Psoas muscle (tissue), 8 donors: ENCODE measurements at regions of chr11 and their contacts with region 1.

Region 1: DNA sequence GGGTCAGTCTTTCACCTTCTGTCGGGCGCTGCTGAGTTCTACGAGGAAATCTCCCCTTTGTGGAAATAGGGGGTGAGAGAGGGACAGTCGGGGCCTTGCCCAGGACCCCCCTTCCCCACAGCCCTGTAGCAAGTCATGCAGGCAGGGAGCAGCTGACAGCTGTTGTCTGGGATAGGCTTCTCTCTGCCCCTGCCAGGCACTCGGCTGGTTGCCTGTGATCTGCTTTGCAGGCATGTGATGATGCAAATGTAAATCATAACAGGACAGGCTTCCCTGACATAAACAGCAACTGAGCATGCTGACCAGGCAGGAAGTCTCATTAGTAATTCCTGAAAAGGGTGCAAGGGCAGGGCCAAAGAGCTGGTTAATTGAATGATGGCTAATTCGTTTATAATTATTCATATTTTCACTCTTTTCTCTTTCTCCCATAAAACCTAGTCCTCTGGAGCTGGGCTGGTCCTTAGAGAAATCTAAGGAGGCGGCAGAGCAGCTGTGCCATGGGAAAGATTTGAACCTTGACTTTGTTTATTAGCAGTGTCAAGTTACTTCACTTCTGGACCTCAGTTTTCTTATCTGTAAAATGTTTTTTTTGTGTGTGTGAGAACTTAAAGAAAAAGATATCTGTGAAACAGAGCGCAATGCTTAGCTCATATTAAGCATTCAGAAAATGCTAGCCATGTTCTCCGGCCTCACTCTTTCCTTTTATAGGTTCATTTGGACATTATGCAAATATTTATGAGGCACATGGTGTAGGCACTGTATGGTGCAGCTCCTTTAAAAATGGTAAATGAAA is 129.7 kb downstream of the LDLRAD3 start:
- DNase-seq: peak; percentile 74 to 90
- ATAC-seq: peak; percentile 94 to 98 (median 96)
- H3K4me3 ChIP-seq: peak overlapping the region; percentile 31
- H3K27ac ChIP-seq: peak overlapping the region; percentile 82
- H3K4me1 ChIP-seq: peaks cover 34% of the 10 kb centered on the region
- H3K27me3 ChIP-seq: no peaks in the 10 kb centered on the region
- CTCF ChIP-seq: no peak

Region 2: DNA sequence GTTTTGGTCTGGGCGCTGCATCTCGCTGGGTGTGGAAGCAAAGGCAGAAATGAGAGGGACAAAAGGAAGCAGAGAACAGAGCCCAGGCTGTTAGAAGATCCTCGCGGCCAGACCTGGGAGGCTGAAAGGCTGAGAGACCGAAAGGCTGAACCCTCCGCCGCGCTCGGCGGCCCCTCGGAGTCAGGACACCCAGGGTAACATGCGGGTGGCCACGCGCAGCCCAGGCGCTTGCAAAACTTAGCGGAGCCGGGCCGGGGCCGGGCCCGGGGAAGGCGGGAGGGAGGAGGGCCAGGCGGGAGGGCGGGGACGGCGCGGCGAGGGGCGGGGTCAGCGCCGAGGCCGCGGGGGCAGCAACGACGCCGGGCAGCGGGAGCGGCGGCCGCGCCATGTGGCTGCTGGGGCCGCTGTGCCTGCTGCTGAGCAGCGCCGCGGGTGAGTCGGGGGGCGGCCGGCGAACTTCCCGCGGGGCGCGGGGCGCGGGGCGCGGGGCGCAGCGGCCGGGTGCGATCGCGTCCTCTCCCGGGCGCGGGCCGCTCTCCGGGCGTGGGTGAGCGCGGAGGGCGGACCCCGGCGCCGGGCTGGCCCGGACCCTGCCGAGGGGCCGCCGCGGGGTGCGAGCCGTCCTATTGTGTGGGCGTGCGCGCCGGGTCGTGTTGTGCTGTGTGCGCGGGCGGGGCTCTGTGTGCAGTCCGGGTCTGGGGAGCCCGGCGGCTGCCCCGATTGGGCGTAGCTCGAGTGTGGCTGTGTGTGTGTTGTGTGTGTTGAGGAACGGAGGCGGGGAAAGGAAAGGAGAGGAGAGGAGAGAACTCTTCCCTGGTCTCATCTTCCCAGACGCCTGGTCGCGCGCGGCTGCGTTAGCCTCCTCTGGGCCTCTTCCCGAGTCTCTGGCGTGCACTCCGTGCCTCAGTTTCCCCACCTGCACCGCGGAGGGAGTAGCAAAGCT is 129.6 kb before region 1 on chr11 and contains the start of gene LDLRAD3:
- intact Hi-C with region 1: loop called in 1 of 2 experiments (anchors 10 kb)
- DNase-seq: peak; percentile 84 to 91
- ATAC-seq: peak; percentile 81 to 90 (median 83)
- H3K4me3 ChIP-seq: peak within 1 kb of the TSS; percentile 75
- H3K27ac ChIP-seq: peak within 1 kb of the TSS; percentile 80
- H3K4me1 ChIP-seq: peaks cover 6% of the 10 kb centered on the region
- H3K27me3 ChIP-seq: no peaks in the 10 kb centered on the region
- CTCF ChIP-seq: no peak
- total RNA-seq, gene LDLRAD3: 5.9 to 16.0 (median 9.6) TPM

Region 3: GRCh38 chr11:36012455-36012854 is 61.2 kb before region 1 on chr11:
- intact Hi-C with region 1: no loop called
- DNase-seq: no peak
- ATAC-seq: peak in 3 of 4 donors; percentile 45 to 72 (median 48)
- H3K4me3 ChIP-seq: no peak overlapping the region
- H3K27ac ChIP-seq: no peak overlapping the region
- H3K4me1 ChIP-seq: peaks cover 44% of the 10 kb centered on the region
- H3K27me3 ChIP-seq: no peaks in the 10 kb centered on the region
- CTCF ChIP-seq: no peak

Region 4: DNA sequence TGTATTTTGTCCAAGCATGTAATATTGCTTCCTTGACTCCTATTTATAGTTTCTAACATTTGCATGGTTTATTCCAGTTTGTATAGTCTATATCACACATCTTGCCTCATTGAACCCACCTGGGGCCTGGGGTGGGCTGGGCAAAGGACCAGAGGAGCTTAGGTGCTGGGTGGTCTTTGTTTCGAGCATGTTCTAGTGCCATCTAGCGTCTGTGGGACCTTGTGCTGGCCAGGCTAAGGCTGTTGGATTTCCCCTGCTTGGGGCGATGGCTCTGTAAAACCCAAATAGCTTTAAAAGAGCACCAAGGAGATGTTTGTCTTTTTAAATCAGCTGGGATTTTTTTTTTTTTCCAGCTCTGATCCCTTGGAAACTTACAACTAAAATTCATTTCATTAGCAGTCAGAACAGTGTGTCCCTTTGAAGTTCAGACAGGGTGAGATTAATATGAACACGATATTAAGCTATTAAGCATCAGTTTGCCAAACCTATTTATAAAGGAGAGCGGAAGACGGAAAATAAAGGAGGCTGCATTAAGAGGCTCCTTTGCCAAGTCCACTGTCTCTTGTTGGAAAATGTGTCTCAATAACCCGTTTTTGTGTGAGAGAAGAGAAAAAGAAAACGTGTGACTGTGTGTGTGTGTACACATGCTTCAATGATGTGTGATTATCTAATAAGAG is 58.3 kb after region 1 on chr11:
- intact Hi-C with region 1: no loop called
- DNase-seq: peak; percentile 52 to 57
- ATAC-seq: peak; percentile 60 to 92 (median 76)
- H3K4me3 ChIP-seq: no peak overlapping the region
- H3K27ac ChIP-seq: no peak overlapping the region
- H3K4me1 ChIP-seq: no peaks in the 10 kb centered on the region
- H3K27me3 ChIP-seq: no peaks in the 10 kb centered on the region
- CTCF ChIP-seq: peak; percentile 69